Dorsolateral prefrontal cortex (tissue), 120 donors: ENCODE measurements at regions of chr17 and their contacts with region 1.

Region 1: DNA sequence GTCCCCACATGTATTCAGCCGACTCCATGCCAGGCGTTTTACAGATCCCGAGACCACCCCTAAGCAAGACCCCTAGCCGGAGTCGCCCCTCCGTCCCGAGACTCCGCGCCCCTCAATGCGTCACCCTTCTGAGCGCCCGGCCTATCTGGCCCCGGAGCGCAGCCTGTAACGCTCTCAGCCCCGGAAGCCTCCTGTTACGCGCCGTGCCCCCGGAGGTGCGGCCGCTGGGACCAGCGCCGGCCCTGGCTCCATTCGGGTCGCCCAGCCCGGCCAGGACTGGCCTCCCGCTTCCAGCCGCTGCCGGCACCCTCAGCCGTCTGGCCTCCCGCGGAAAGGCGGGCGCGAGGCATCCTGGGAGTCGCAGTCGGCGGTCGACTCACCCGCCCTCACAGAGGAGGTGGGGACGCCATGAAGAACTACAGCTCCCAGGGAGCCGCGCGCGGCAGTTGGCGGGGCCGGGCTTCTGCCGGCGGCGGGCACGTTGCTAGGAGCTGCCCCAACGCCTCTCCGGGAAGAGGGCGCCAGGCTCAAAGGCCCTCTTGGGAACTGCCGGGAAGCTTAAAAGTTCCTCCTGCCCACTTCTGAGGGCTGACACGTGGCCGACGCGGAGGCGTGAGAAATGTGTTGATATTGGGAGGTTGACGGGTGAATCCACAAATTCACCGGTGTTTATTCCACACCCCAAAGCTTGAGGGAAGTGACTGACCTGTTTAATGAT is at the start of gene FBF1:
- DNase-seq: peak; percentile 91 to 99 (median 96)
- H3K4me3 ChIP-seq: peak within 1 kb of the TSS; percentile 50 to 99 (median 88)
- H3K27ac ChIP-seq: peak within 1 kb of the TSS in 54 of 59 donors; percentile 3 to 93 (median 77)
- H3K27me3 ChIP-seq: no peaks in the 10 kb centered on the region
- CTCF ChIP-seq: peak in 53 of 56 donors; percentile 15 to 68 (median 44)
- total RNA-seq, gene FBF1: 16.8 to 50.0 (median 27.8) TPM

Region 2: DNA sequence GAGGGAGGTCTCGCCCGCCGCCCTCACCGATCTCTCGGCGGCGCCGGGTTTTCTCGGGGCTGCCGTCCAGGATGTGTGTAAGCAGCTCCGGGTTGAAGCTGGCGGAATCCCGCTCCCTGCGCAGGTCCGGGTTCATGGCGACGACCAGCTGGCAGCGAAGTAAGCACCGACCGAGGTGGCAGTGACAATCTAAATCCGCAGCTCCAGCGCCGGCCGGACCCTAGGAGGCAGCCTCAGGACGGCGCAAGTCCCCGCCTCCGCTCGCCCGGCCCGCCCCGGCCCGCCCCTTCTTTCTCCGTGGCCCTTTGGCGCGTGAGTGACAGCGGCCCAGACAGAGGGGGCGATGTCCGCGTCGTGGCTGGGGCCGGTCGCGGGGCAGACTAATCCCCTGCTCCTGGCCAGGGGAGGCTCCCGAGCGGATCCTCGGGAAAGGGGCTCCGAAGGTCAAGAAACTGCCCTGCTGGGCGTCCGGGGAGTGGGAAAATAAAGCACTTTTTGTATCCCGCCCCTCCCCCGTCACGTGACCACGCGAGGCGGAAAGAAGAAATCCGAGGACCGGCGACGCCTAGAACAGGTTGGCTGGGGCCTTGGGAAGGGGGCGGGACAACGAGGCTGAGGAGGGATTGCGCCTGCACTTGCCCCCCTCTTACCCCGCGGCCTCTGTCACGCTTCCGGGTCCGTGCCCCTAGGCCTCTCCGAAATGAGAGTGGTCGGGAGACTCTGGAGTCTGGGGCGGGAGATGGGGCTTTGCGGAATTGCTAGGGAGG is 38.2 kb after region 1 on chr17 and contains the starts of genes ACOX1 and TEN1:
- intact Hi-C with region 1: loop called (anchors 1 to 2 kb)
- DNase-seq: peak; percentile 93 to 98 (median 96)
- H3K4me3 ChIP-seq: peak within 1 kb of the TSS; percentile 68 to 99 (median 91)
- H3K27ac ChIP-seq: peak within 1 kb of the TSS; percentile 89 to 100 (median 99)
- H3K27me3 ChIP-seq: no peaks in the 10 kb centered on the region
- CTCF ChIP-seq: peak in 52 of 56 donors; percentile 15 to 72 (median 51)
- total RNA-seq, gene ACOX1: 34.9 to 82.1 (median 62.5) TPM
- total RNA-seq, gene TEN1: 4.0 to 20.6 (median 9.1) TPM

Region 3: DNA sequence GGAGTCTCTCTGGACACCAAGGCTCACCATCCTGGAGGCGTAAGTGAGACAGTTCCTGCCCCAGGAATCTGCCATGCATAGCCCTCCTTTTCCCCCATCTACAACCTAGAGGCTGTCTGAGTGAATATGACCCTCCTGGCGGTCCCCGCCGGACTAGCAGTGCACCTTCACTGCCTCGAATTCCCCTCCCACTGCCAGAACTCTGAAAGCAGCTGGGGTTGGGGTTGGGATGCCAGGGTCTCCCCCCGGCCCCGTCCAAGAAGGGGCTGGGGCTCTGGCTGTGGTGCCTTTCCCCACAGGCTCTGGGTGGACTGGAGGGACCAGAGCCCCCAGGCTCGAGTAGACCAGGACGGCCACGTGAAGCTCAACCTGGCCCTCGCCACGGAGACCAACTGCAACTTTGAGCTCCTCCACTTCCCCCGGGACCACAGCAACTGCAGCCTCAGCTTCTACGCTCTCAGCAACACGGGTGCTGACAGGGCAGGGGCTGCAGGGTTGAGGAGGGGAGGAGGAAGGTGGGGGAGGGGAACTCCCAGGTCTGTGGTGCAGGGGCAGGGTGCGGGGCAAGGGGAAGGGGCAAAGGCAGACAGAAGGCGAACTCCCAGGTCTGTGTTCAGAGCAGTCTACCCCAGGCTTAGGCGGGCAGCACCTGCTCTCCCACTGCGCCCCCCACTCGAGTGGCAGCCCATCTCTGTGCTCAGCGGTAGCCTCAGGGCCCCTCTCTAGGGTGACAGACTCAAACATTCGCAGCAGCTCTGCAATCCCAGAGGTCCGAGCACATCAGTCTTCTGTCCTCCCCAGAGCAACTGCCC is 139.3 kb after region 1 on chr17:
- intact Hi-C with region 1: no loop called
- DNase-seq: peak in 1 of 10 donors; percentile 32
- H3K4me3 ChIP-seq: no peak overlapping the region
- H3K27ac ChIP-seq: peak overlapping the region in 1 of 59 donors; percentile 5
- H3K27me3 ChIP-seq: peaks cover 0 to 35% (median 26%) of the 10 kb centered on the region in 45 donors
- CTCF ChIP-seq: no peak